ENCODE measurements at regions of chr2 and their contacts with region 1.

Region 1: GRCh38 chr2:82246220-82246775 is 1941.7 kb upstream of the LRRTM1 start:
- DNase-seq: no peak
- ATAC-seq: no peak

Region 2: DNA sequence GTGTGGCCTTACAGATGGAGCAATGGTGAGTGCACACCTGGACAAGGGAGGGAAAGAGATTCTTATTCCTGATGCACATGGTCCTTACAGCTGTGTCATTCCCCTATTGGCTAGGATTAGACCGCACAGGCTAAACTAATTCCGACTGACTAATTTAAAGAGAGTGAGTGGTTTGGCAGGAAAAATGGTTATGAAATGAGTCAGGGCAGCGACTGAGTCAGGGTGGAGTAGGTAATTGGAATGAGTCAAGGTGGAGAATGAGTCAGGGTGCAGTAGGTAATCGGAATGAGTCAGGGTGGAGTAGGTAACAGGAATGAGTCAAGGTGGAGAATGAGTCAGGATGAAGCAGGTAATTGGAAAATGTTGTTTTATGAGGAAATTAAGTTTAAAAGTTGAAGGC is 588.1 kb before region 1 on chr2:
- intact Hi-C with region 1: no loop called
- DNase-seq: no peak
- ATAC-seq: no peak

Region 3: DNA sequence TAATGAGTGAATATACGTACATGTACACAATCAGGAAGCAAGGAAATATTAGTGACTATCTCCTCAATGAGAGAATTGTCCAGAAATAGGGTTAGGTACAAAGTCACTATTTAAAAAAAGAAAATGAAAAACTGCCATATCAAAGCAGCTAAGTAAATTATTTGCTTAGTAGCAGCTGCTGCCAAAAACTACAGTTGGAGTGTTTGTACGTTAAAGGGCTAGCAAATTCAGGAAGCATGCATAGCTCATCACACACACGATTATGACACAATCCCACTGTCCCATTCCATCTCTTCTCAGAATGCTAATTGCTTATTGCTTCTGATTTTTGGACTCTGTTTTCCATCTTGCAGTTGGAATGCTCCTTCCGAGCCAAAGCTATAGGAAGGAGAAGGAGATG is 70.7 kb after region 1 on chr2:
- intact Hi-C with region 1: loop called (anchors 2 kb)
- DNase-seq: no peak
- ATAC-seq: no peak

Measured in sciatic nerve (tissue), 2 donors.